K562 (cell line): ENCODE measurements at regions of chr12 and their contacts with region 1.

Region 1: DNA sequence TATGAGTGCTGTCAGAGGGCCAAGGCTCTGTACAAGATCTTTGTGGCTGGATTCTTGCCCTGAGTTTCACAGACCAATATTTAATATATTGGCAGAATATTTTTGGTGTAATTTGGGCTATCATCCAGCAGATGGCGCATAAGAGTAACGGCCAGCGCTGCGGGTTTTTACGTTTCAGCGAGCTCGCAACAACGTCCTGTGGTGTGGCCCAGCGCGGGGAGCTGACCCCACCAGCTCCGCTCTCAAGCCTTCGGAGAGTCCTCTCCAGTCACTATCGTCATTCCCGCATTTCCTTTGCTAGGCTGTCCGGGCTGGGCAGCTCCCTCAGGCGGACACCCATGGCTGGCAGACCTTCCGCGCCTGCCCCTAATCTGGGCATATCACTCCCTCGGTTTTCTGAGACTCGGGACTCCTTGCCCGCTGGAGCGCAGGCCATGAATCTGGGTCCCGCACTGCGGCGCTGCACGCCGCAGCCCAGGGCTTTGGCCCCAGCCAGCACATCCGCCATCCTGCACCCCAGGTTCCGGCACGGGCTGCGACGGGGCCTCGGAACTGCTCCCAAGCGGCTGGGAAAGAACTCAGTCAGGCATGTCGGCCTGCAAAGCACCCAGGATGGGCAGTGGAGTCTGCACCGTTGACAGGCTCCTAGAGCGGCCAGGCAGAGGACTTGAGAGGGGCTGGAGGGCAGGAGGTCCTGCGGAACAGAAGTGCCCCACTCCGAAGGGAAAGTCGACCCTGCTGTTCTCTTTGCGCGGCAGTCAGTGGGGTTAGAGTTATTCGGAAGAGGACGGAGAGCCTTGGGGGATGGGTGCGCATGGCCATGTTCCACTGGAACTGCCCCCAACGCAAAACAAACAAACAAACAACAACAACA is 18.4 kb downstream of the OLR1 start:
- DNase-seq: peak; percentile 32 to 48 (median 38)
- ATAC-seq: peak; percentile 78
- H3K4me3 ChIP-seq: peak overlapping the region; percentile 15
- H3K27ac ChIP-seq: no peak overlapping the region
- H3K4me1 ChIP-seq: peaks cover 0 to 10% of the 10 kb centered on the region in 2 experiments; a peak in 2 of 5 replicates
- H3K27me3 ChIP-seq: peaks cover 0 to 11% of the 10 kb centered on the region in 2 experiments; a peak in 2 of 5 replicates
- CTCF ChIP-seq: peak; percentile 55 to 58 (median 55); a peak in 5 of 6 replicates
- EP300 ChIP-seq: no peak
- POLR2A ChIP-seq: no peak
- RAD21 ChIP-seq: peak; percentile 44 to 61

Region 2: GRCh38 chr12:10167588-10167987 is 14.1 kb after region 1 on chr12:
- CTCF ChIA-PET with region 1: no interaction called
- POLR2A ChIA-PET with region 1: no interaction called
- in situ Hi-C with region 1: no loop called
- intact Hi-C with region 1: no loop called
- DNase-seq: no peak
- ATAC-seq: no peak
- H3K4me3 ChIP-seq: no peak overlapping the region
- H3K27ac ChIP-seq: no peak overlapping the region
- H3K4me1 ChIP-seq: no peaks in the 10 kb centered on the region
- H3K27me3 ChIP-seq: no peaks in the 10 kb centered on the region; a peak in 1 of 5 replicates
- CTCF ChIP-seq: no peak
- EP300 ChIP-seq: no peak
- POLR2A ChIP-seq: no peak
- RAD21 ChIP-seq: no peak

Region 3: DNA sequence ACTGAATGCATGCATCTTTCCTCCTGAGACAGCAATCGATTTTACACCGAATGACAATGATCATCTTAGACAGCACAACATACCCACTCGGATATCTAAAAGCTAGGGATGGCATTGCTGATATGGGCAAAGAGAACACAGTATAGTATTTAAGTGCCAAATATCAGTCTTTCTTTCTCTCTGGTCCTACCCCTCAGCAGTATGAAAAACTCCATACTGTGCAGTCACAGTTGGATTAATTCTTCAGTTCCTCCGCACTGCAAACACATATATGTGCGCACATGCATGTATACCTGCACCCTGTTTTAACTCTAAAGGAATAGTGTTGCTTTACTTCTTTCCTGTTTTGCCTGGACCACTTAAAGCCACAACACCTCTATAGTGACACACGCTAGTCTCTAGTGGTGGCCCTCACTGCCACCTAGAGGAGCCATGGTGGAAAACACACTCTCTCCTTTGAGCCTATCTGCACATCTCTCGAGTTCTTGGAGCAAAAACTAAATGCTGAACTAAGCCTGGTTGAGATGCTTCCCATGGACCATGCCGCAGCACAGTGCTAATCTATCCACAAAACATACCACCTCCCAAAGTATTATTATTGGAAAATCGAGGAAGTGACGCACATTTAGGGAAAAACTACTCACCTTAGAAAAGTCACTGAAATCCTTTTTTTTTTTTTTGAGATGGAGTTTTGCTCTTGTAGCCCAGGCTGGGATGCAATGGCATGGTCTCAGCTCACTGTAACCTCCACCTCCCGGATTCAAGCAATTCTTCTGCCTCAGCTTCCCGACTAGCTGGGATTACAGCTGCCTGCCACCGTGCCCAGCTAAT is 37.3 kb after region 1 on chr12:
- CTCF ChIA-PET with region 1: interaction called, 4 read pairs
- POLR2A ChIA-PET with region 1: interaction called, 3 read pairs
- in situ Hi-C with region 1: no loop called
- intact Hi-C with region 1: loop called (anchors 1 kb)
- DNase-seq: peak; percentile 34 to 55 (median 41)
- ATAC-seq: peak; percentile 96
- H3K4me3 ChIP-seq: no peak overlapping the region
- H3K27ac ChIP-seq: no peak overlapping the region
- H3K4me1 ChIP-seq: no peaks in the 10 kb centered on the region; a peak in 1 of 5 replicates
- H3K27me3 ChIP-seq: peaks cover 0 to 17% of the 10 kb centered on the region in 2 experiments; a peak in 2 of 5 replicates
- CTCF ChIP-seq: peak; percentile 59 to 68 (median 63)
- EP300 ChIP-seq: no peak
- POLR2A ChIP-seq: no peak
- RAD21 ChIP-seq: peak; percentile 32 to 57; a peak in 3 of 4 replicates